ENCODE measurements at regions of chr11 and their contacts with region 1.

Region 1: DNA sequence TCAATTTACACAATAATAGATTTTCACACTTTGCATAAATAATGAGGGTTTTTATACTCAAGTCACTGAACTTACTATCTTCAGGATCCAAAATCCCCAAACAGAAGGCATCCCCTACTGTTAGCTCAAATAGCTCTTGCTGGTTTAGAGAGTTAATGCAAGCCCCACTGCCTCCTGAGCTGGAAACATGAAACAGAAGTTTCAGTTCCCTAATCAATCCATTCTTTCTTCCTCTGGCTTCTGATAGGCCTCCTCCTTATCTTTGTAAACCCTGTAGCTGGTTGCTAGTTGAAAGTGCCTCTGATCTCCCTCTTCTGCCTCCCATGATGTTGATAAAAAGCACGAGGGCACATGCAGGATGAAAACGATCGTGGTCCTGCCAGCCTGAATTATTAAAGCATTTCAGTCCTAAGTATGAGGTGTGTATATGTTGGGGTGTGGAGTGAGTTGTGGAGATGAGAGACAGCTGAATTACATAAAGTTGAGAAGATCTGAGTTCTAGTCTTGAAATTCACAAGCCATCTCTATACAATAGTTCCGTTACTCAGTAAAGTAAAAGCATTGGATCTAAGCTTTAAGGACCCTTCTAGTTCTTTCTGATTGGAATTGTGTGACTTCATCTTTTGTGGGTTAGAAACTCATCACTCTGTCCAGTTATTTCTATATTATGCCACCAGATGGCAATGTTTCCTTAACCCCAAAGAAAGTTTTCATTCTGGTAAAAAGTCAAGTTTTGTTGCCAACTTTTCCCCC is 35.0 kb upstream of the EHF start:
- DNase-seq: no peak
- ATAC-seq: peak; percentile 57

Region 2: GRCh38 chr11:34653826-34654490 is 68.0 kb after region 1 on chr11:
- intact Hi-C with region 1: loop called (anchors 5 kb)
- DNase-seq: no peak
- ATAC-seq: peak; percentile 41

Region 3: GRCh38 chr11:34890812-34891211 is 304.9 kb after region 1 on chr11:
- intact Hi-C with region 1: loop called (anchors 1 kb)
- DNase-seq: no peak
- ATAC-seq: no peak

Measured in Right ventricle myocardium inferior (tissue), 1 donor.